Caco-2 (cell line): ENCODE measurements at regions of chr1 and their contacts with region 1.

Region 1: GRCh38 chr1:36099681-36100341 is 11.1 kb downstream of the ADPRS start:
- DNase-seq: peak; percentile 73 to 78
- H3K4me3 ChIP-seq: no peak overlapping the region
- H3K4me3 Mint-ChIP-seq: no peak overlapping the region
- H3K27ac Mint-ChIP-seq: no peak overlapping the region
- H3K4me1 ChIP-seq: no peaks in the 10 kb centered on the region
- H3K4me1 Mint-ChIP-seq: no peaks in the 10 kb centered on the region
- H3K27me3 ChIP-seq: no peaks in the 10 kb centered on the region
- H3K27me3 Mint-ChIP-seq: no peaks in the 10 kb centered on the region
- CTCF ChIP-seq: peak; percentile 78 to 79

Region 2: DNA sequence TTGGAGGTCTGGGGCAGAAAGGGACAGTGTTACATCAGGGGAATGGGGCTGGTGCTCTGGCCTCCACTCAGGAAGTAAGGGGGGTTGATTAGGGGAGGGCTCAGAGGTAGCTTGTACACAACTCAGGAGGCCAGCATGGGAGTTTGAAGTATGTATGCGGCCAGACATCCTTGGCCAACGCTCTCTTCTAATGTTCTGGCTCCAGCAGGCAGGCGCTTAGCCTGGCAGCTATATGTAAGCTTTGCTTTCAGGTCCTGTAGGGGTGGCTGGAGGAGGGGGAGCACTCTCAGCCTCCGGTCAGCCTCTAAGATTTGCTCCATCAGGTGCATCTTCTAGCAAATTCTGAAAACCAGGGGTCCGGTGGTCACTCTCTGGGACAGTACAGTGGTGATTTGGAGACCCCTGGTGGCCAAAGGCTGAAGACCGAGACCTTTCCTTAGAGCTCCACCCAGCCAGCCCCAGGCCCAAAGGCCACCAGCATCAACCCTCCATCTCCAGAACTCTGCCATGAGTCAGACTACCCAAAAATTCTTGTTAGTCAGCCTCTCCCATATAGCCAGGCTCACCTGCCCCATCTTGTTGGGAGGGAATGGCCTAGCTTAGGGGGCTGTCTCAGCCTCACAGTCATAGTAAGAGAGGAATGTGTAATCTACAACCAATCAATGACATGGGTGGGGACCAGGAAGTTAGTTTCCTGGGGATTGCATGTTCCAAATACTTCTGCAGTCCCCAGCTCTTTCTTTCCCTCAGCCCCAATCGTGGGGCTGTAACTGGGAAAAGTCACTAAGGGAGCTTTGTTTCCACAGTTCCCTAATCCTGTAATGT is 34.9 kb after region 1 on chr1:
- CTCF ChIA-PET with region 1: interaction called, 14 read pairs
- POLR2A ChIA-PET with region 1: no interaction called
- intact Hi-C with region 1: loop called (anchors 1 kb)
- DNase-seq: peak; percentile 49 to 66
- H3K4me3 ChIP-seq: no peak overlapping the region
- H3K4me3 Mint-ChIP-seq: no peak overlapping the region
- H3K27ac Mint-ChIP-seq: no peak overlapping the region
- H3K4me1 ChIP-seq: no peaks in the 10 kb centered on the region
- H3K4me1 Mint-ChIP-seq: no peaks in the 10 kb centered on the region
- H3K27me3 ChIP-seq: no peaks in the 10 kb centered on the region
- H3K27me3 Mint-ChIP-seq: no peaks in the 10 kb centered on the region
- CTCF ChIP-seq: peak; percentile 66 to 69